Heart left ventricle (tissue), 16 donors: ENCODE measurements at regions of chr16 and their contacts with region 1.

Region 1: GRCh38 chr16:66406534-66407221 is 20.4 kb upstream of the BEAN1 start:
- DNase-seq: peak; percentile 85 to 92 (median 88)
- ATAC-seq: peak; percentile 72 to 88 (median 84)
- H3K4me3 ChIP-seq: peak overlapping the region; percentile 22 to 69 (median 56)
- H3K27ac ChIP-seq: peak overlapping the region in 11 of 12 donors; percentile 24 to 82 (median 63)
- H3K4me1 ChIP-seq: peaks cover 4 to 33% (median 24%) of the 10 kb centered on the region in 12 donors
- H3K27me3 ChIP-seq: no peaks in the 10 kb centered on the region
- CTCF ChIP-seq: peak; percentile 72 to 98 (median 92)
- POLR2A ChIP-seq: peak in 1 of 2 donors; percentile 6

Region 2: GRCh38 chr16:66295761-66296520 is 110.7 kb before region 1 on chr16:
- intact Hi-C with region 1: no loop called
- DNase-seq: no peak
- ATAC-seq: no peak
- H3K4me3 ChIP-seq: no peak overlapping the region
- H3K27ac ChIP-seq: no peak overlapping the region
- H3K4me1 ChIP-seq: no peaks in the 10 kb centered on the region
- H3K27me3 ChIP-seq: peaks cover 0 to 6% (median 0%) of the 10 kb centered on the region in 9 donors
- CTCF ChIP-seq: no peak
- POLR2A ChIP-seq: no peak

Region 3: GRCh38 chr16:66357153-66357928 is 49.3 kb before region 1 on chr16:
- intact Hi-C with region 1: loop called in 3 of 10 experiments (anchors 5 kb)
- DNase-seq: peak in 3 of 5 donors; percentile 59 to 72 (median 62)
- ATAC-seq: peak in 3 of 4 donors; percentile 24 to 38 (median 31)
- H3K4me3 ChIP-seq: no peak overlapping the region
- H3K27ac ChIP-seq: peak overlapping the region in 4 of 12 donors; percentile 13 to 82 (median 28)
- H3K4me1 ChIP-seq: peaks cover 6 to 50% (median 36%) of the 10 kb centered on the region in 12 donors
- H3K27me3 ChIP-seq: peaks cover 0 to 16% (median 0%) of the 10 kb centered on the region in 9 donors
- CTCF ChIP-seq: peak; percentile 61 to 83 (median 77)
- POLR2A ChIP-seq: no peak

Region 4: DNA sequence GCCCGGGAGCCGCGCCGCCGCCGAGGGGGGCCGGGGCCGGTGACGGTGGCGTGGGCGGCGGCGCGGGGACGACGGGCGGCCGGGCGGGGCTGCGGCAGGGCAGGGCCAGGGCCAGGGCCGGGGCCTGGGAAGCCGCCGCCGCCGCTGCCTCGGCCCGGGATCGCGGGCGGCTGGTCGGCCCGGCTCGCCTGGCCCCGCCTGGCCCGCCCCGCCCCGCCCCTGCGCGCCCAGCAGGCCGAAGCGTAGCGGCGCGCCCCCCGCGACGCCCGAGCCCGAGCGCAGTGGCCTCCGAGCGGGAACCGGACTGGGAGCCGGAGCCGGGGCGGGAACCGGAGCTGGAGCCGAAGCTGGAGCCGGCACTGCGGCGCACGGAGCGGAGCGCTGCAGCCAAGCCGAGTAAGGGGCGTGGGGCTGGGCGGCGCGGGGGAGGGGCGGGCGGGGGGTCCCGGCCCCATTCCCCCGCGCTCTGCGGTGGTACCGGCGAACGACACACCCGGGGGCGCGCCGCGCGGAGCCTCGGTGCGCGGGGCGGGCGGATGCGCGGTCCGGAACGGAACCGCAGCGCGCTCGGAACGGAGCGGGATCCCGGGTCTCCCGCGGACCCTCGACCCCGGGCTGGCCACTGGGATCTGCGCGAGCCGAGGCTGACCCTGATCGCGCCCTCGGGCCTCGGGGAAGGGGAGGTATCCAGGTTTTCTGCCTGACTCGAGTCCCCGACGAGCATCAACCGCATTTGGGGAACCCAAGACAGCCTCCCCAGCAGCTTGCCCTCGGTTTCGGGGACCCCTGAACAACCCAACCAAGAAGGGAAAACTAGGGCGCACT is 20.6 kb after region 1 on chr16 and contains the start of gene BEAN1:
- intact Hi-C with region 1: no loop called
- DNase-seq: peak in 1 of 5 donors; percentile 67
- ATAC-seq: peak in 3 of 4 donors; percentile 10 to 78 (median 70)
- H3K4me3 ChIP-seq: peak within 1 kb of the TSS; percentile 34 to 73 (median 59)
- H3K27ac ChIP-seq: no peak within 1 kb of the TSS
- H3K4me1 ChIP-seq: peaks cover 0 to 26% (median 12%) of the 10 kb centered on the region in 12 donors
- H3K27me3 ChIP-seq: peaks cover 0 to 66% (median 9%) of the 10 kb centered on the region in 9 donors
- CTCF ChIP-seq: no peak
- POLR2A ChIP-seq: no peak
- total RNA-seq, gene BEAN1: 0.58 to 7.9 (median 1.5) TPM

Region 5: DNA sequence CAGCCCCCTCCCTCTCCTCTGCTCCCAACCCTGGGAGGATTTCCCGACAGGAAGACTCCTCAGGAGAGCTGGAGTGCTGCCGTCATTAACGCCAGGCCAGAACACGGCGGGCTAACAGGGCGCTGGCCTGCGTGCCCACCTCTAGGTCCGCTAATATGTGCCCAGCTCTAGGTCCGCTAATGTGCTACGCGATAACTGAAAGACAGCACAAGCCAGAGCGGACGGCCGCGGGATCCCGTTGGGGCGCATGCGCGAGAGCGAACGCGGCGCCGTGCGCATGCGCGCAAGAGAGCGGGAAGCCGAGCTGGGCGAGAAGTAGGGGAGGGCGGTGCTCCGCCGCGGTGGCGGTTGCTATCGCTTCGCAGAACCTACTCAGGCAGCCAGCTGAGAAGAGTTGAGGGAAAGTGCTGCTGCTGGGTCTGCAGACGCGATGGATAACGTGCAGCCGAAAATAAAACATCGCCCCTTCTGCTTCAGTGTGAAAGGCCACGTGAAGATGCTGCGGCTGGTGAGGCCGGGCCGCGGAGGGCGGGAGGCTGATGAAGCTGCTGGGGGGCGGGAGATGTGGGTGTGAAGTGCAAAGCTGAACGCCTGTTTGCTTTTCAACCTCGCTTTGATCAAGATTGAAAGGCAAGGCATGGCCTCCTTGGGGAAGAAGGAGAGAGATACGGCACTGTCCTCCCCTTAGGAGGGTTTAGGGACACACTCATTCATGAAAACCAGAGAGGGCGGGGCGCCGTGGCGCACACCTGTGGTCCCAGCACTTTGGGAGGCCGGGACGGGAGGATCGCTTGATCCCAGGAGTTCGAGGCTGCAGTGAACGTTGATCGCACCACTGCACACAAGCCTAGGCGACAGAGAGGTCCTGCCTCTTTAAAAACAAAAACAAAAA is 145.9 kb after region 1 on chr16 and contains the start of gene CKLF:
- intact Hi-C with region 1: loop called in 1 of 10 experiments (anchors 5 kb)
- DNase-seq: peak; percentile 88 to 96 (median 91)
- ATAC-seq: peak; percentile 77 to 91 (median 84)
- H3K4me3 ChIP-seq: peak within 1 kb of the TSS; percentile 49 to 78 (median 64)
- H3K27ac ChIP-seq: peak within 1 kb of the TSS; percentile 84 to 99 (median 93)
- H3K4me1 ChIP-seq: peaks cover 0 to 81% (median 45%) of the 10 kb centered on the region in 12 donors
- H3K27me3 ChIP-seq: no peaks in the 10 kb centered on the region
- CTCF ChIP-seq: no peak
- POLR2A ChIP-seq: peak in 1 of 2 donors; percentile 77
- total RNA-seq, gene CKLF: 4.1 to 28.9 (median 6.4) TPM

Region 6: GRCh38 chr16:66728117-66728787 is 321.6 kb after region 1 on chr16:
- intact Hi-C with region 1: loop called in 1 of 10 experiments (anchors 5 kb)
- DNase-seq: peak in 4 of 5 donors; percentile 30 to 47 (median 40)
- ATAC-seq: peak; percentile 75 to 88 (median 83)
- H3K4me3 ChIP-seq: no peak overlapping the region
- H3K27ac ChIP-seq: no peak overlapping the region
- H3K4me1 ChIP-seq: peaks cover 0 to 15% (median 4%) of the 10 kb centered on the region in 12 donors
- H3K27me3 ChIP-seq: no peaks in the 10 kb centered on the region
- CTCF ChIP-seq: peak; percentile 46 to 80 (median 70)
- POLR2A ChIP-seq: no peak

Region 7: DNA sequence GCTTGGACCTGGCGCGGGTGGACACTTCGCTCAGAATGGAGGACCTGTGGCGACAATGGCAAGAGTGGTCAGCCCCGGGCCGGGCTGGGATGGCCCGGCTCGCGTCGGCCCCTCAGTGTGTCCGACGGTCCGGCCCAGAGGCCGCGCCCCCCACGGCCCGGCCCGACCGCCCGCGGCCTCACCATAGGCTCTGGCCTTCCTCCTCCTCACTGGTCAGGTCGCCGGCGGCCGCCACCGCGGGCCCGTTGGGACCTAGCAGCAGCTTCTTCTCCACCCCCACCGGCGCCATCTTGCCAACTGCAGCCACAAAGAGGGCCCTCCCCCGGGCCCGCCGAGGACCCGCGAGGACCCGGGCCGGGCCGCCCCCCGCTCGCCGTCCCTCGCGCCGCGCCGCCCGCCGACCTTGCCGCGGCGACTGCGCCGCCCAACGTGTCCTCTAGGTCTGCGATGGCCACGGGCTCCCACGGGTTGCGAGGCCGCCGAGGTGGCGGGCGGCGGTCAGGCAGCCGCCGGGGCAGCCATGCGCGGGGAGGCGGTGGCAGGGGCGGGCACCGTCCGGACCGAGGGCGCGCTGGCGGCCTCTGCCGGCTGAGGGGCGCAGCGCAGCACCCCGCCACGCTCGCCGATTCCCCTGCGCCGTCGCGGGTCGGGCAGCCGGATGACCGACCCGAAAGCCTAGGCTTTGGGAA is 344.8 kb after region 1 on chr16 and contains the start of gene DYNC1LI2:
- intact Hi-C with region 1: loop called in 3 of 10 experiments (anchors 10 kb)
- DNase-seq: peak; percentile 86 to 91 (median 87)
- ATAC-seq: peak; percentile 79 to 95 (median 92)
- H3K4me3 ChIP-seq: peak within 1 kb of the TSS; percentile 63 to 100 (median 96)
- H3K27ac ChIP-seq: peak within 1 kb of the TSS; percentile 88 to 100 (median 95)
- H3K4me1 ChIP-seq: peaks cover 0 to 55% (median 21%) of the 10 kb centered on the region in 12 donors
- H3K27me3 ChIP-seq: no peaks in the 10 kb centered on the region
- CTCF ChIP-seq: peak; percentile 63 to 98 (median 88)
- POLR2A ChIP-seq: peak in 1 of 2 donors; percentile 38
- total RNA-seq, gene DYNC1LI2: 58.3 to 117 (median 88.6) TPM

Region 8: GRCh38 chr16:66872943-66873684 is 466.4 kb after region 1 on chr16:
- intact Hi-C with region 1: loop called in 7 of 10 experiments (anchors 5 to 10 kb)
- DNase-seq: peak; percentile 90 to 96 (median 93)
- ATAC-seq: peak; percentile 84 to 96 (median 96)
- H3K4me3 ChIP-seq: peak overlapping the region in 10 of 12 donors; percentile 27 to 58 (median 46)
- H3K27ac ChIP-seq: peak overlapping the region in 7 of 12 donors; percentile 7 to 77 (median 49)
- H3K4me1 ChIP-seq: peaks cover 0 to 25% (median 5%) of the 10 kb centered on the region in 12 donors
- H3K27me3 ChIP-seq: no peaks in the 10 kb centered on the region
- CTCF ChIP-seq: peak; percentile 86 to 99 (median 94)
- POLR2A ChIP-seq: no peak